OCI-LY7 (cell line): ENCODE measurements at regions of chr7 and their contacts with region 1.

Region 1: DNA sequence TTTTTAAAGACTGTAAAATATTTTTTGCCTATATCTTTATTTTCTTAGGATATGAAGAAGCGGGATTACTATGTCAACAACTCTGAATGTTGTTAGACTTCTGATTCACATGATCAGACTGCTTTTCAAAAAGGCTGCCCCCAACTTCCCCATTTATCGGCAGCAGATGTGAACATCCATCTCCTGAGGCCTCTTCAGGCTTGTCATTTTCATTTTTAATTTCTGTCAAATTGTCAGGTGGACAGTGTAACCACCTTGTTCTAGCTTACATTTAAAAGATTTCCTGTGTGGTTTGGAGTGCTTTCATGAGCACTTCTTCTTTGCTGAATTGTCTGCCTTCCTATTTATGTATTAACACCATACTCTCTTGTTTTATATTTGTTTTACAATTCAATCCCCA is 78.8 kb upstream of the GSDME start:
- DNase-seq: peak; percentile 93
- H3K4me3 ChIP-seq: peak overlapping the region; percentile 34
- H3K27ac ChIP-seq: peak overlapping the region; percentile 95
- H3K4me1 ChIP-seq: peaks cover 89% of the 10 kb centered on the region
- CTCF ChIP-seq: no peak

Region 2: DNA sequence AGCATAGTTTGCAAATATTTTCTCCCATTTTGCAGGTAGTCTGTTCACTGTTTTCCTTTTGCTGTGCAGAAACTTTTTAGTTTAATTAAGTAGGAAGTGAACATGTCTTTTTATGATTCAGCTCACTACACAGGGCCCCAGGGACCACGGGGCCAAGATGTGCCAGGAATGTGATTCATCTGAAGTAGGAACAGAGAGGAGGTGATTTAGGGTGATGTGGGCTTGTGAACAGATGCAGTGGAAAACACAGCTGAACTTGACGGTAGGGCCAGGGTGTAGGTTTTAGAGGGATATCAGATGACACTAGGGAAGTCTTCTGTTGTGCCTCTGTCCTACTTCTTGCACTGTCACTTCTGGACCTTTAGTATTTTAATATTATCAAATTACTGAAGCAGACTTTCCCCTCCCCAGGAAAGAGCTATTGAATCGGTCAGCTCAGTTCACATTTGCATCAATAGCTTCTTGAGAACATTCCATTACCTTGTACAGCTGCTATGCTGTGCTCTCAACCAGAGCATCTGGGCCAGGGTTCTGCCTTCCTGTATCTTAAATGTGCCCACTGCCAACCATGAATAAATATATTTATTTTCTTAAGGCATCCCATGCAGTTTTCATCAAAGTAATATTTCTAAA is 47.0 kb after region 1 on chr7:
- CTCF ChIA-PET with region 1: no interaction called
- POLR2A ChIA-PET with region 1: interaction called, 32 read pairs
- intact Hi-C with region 1: no loop called
- DNase-seq: peak; percentile 74
- H3K4me3 ChIP-seq: peak overlapping the region; percentile 41
- H3K27ac ChIP-seq: peak overlapping the region; percentile 71
- H3K4me1 ChIP-seq: peaks cover 93% of the 10 kb centered on the region
- CTCF ChIP-seq: no peak